ENCODE measurements at regions of chrX and their contacts with region 1.

Region 1: DNA sequence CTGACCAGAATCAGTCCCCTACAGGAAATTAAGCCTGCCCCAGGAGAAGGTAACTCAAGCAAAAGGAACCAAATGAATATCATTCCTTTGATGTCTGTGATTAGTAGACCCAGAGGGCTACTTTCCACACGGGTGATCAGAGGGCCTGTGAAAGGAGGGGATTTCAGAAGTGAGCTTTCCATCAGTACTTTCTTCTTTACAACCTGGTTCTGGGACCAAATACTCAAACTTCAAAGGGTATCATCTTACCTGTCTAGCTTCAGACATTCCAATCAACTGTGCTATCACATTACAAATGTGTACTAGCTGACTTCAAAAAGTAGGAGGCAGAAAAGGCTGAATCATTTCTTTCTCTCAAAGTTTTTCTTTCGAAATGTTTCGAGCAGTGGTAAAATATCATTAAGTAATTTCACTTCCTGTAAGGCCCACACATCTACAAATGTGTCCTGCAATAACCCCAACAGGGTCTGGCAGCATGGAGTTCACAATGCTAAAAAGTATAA is 23.9 kb downstream of the ACSL4 start:
- DNase-seq: peak; percentile 10
- H3K4me3 Mint-ChIP-seq: no peak overlapping the region
- H3K27ac Mint-ChIP-seq: peak overlapping the region; percentile 71
- H3K4me1 Mint-ChIP-seq: peaks cover 75% of the 10 kb centered on the region
- H3K27me3 Mint-ChIP-seq: no peaks in the 10 kb centered on the region

Region 2: DNA sequence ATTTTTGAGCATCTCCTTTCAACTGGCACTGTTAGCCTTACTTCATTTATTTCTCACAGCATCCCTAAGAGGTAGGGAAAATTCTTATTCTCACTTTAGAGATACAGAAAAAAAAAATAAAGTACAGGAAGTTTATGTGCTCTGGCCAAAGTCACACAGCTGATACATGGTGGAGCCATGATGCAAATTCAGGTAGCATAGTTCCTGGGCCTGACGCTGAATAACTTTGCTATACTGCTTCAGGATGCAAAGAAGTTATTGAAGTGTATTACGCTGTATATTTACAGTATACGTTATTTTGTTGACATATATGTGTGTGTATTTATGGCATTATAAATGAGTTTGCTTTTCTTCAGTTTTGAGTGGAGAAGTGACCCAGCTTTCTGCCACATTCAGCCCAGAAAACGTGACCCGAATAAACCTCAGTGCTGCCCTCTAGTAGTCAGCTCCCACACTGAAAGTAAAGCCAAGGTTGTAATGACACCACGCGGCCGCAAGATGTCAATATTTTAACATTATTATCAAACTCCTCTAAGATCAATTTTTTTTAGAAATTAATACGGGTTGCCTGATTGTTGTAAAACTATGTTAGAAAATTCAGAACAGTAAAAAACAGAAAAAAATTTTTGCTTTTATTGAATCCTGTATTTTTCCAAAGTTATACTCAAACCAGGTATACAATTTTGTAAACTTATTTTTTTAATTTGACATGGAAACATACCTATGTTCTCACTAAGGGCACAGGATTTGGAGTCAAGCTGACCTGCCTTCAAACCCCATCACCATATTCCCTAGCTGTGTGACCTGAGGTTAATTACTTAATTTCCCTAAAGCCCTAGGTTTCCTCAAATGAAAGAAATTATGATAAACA is 223.5 kb before region 1 on chrX:
- CTCF ChIA-PET with region 1: no interaction called
- intact Hi-C with region 1: loop called (anchors 2 kb)
- DNase-seq: peak; percentile 74
- H3K4me3 Mint-ChIP-seq: no peak overlapping the region
- H3K27ac Mint-ChIP-seq: no peak overlapping the region
- H3K4me1 Mint-ChIP-seq: no peaks in the 10 kb centered on the region
- H3K27me3 Mint-ChIP-seq: peaks cover 4% of the 10 kb centered on the region

Region 3: GRCh38 chrX:109685656-109686078 is 23.5 kb before region 1 on chrX:
- CTCF ChIA-PET with region 1: interaction called, 3 read pairs
- intact Hi-C with region 1: loop called (anchors 1 kb)
- DNase-seq: peak; percentile 55
- H3K4me3 Mint-ChIP-seq: no peak overlapping the region
- H3K27ac Mint-ChIP-seq: peak overlapping the region; percentile 89
- H3K4me1 Mint-ChIP-seq: peaks cover 33% of the 10 kb centered on the region
- H3K27me3 Mint-ChIP-seq: no peaks in the 10 kb centered on the region

Region 4: GRCh38 chrX:109856974-109857373 is 147.8 kb after region 1 on chrX:
- CTCF ChIA-PET with region 1: interaction called, 65 read pairs
- intact Hi-C with region 1: loop called (anchors 1 kb)
- DNase-seq: peak; percentile 15
- H3K4me3 Mint-ChIP-seq: no peak overlapping the region
- H3K27ac Mint-ChIP-seq: no peak overlapping the region
- H3K4me1 Mint-ChIP-seq: no peaks in the 10 kb centered on the region
- H3K27me3 Mint-ChIP-seq: no peaks in the 10 kb centered on the region

Region 5: DNA sequence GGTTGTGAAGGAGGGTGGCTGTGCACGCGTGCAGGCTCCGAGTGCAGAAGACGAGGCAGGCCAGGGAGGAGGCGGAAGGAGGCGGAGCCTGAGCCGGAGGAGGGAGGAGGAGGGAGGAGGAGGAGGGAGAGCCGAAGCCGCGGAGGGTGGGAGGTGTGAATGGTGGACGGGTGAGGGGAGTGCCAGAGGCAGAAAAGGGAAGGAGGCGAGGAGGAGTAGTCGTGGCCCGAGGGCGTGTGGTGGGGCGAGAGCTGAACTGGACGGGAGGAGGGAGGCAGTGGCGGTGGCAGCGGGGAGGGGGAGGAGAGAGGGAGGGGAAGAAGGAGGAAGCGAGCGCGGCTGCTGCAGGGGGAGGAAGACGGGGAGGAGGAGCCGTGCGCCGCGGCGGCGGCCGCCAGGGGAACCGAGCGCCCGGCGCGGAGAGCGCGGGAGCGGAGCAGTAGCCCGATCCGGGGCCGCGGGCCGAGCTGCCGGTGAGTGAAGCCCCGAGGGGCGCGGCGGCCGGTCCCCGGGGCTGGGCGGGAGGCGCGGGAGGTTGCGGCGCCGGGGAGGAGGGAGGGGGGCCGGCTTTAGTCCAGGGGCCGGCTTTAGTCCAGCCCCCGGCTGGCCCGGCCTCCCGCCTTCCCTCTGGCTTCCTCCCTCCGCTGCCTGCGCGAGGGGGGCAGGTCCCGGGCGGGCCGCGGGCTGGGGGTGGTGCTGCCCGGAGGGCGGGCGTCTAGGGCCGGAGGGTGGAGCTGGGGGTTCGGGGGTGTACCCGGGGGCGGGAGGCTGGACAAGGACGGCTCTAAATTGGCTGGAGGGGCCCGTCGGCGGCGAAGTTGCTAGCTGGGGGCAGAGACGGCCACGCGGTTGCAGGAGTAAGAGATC is 293.4 kb after region 1 on chrX and contains the start of gene TMEM164:
- CTCF ChIA-PET with region 1: no interaction called
- intact Hi-C with region 1: no loop called
- DNase-seq: peak; percentile 83
- H3K4me3 Mint-ChIP-seq: peak within 1 kb of the TSS; percentile 83
- H3K27ac Mint-ChIP-seq: peak within 1 kb of the TSS; percentile 81
- H3K4me1 Mint-ChIP-seq: peaks cover 31% of the 10 kb centered on the region
- H3K27me3 Mint-ChIP-seq: no peaks in the 10 kb centered on the region
- total RNA-seq, gene TMEM164: 11.9 to 12.0 TPM